PC-9 (cell line): ENCODE measurements at regions of chr3 and their contacts with region 1.

Region 1: GRCh38 chr3:67662733-67663132 is 8.3 kb upstream of the SUCLG2 start:
- DNase-seq: no peak
- H3K4me3 ChIP-seq: no peak overlapping the region
- H3K27ac ChIP-seq: no peak overlapping the region
- H3K4me1 ChIP-seq: no peaks in the 10 kb centered on the region
- H3K27me3 ChIP-seq: no peaks in the 10 kb centered on the region
- CTCF ChIP-seq: no peak

Region 2: GRCh38 chr3:67540198-67540894 is 122.4 kb before region 1 on chr3:
- CTCF ChIA-PET with region 1: no interaction called
- POLR2A ChIA-PET with region 1: no interaction called
- intact Hi-C with region 1: no loop called
- DNase-seq: no peak
- H3K4me3 ChIP-seq: no peak overlapping the region
- H3K27ac ChIP-seq: no peak overlapping the region
- H3K4me1 ChIP-seq: no peaks in the 10 kb centered on the region
- H3K27me3 ChIP-seq: no peaks in the 10 kb centered on the region
- CTCF ChIP-seq: no peak

Region 3: GRCh38 chr3:67739851-67740250 is 77.1 kb after region 1 on chr3:
- CTCF ChIA-PET with region 1: no interaction called
- POLR2A ChIA-PET with region 1: interaction called, 10 read pairs
- intact Hi-C with region 1: no loop called
- DNase-seq: no peak
- H3K4me3 ChIP-seq: no peak overlapping the region
- H3K27ac ChIP-seq: no peak overlapping the region
- H3K4me1 ChIP-seq: no peaks in the 10 kb centered on the region
- H3K27me3 ChIP-seq: no peaks in the 10 kb centered on the region
- CTCF ChIP-seq: no peak

Region 4: DNA sequence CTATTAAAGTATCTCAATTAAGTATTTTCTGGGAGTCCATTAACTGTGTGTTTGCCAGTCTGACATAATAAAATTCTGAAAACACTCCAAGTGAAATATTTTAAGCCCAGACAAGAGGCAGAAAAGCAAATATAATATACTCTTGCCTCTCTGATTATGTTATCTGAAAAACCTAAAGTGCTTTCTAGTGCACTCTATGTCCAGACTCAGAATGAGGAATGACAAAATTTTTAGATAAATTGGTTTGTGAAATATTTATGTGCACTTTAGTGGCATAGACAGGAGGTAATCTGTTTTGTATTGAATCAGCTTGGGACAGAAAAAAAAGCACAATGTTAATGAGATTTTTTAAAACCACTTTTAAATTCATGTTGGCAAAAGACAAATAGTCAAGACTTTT is 499.9 kb after region 1 on chr3:
- CTCF ChIA-PET with region 1: no interaction called
- POLR2A ChIA-PET with region 1: no interaction called
- intact Hi-C with region 1: no loop called
- DNase-seq: no peak
- H3K4me3 ChIP-seq: no peak overlapping the region
- H3K27ac ChIP-seq: no peak overlapping the region
- H3K4me1 ChIP-seq: no peaks in the 10 kb centered on the region
- H3K27me3 ChIP-seq: no peaks in the 10 kb centered on the region; the same call in 1 of the 2 replicates
- CTCF ChIP-seq: no peak